Right cardiac atrium (tissue), 5 donors: ENCODE measurements at regions of chr3 and their contacts with region 1.

Region 1: DNA sequence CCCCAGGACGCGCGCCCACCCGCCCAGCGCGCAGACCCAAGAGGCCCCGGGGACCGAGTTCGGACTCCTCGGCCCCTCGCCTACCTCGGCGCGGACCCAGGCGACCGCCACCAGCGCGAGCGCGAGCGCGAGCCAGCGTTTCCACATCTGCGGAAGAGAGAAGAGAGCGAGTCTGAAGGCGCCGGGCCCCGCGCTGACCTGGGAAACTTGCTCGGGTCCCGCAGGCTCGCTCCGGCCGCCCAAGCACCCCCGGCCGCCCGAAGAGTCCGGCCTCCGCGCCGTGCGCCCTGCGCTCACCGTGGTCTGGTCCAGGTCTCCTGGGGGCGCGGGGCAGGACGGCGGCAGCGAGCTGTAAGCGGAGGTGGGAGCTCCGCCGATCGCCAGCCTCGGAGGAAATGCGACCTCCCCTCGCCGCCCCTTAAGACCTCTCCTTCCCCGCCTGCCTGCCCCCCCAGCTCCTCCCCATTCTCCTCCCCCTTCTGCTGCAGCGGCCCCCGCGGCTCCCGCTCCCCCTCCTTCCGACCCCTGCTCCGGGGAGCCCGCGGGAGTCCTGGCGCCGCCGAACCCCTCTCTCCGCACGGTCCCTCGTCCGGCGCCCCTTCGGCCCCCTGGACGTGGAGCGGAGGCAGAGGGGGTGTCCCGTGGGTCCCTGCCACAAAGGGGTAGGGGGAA is at the start of gene FSTL1:
- DNase-seq: peak; percentile 84 to 91 (median 91)
- ATAC-seq: peak; percentile 86
- H3K4me3 ChIP-seq: peak within 1 kb of the TSS; percentile 63
- H3K27ac ChIP-seq: peak within 1 kb of the TSS; percentile 64
- H3K4me1 ChIP-seq: peaks cover 10% of the 10 kb centered on the region
- H3K27me3 ChIP-seq: no peaks in the 10 kb centered on the region
- total RNA-seq, gene FSTL1: 341 to 735 (median 465) TPM

Region 2: GRCh38 chr3:120021523-120021922 is 429.2 kb before region 1 on chr3:
- intact Hi-C with region 1: no loop called
- DNase-seq: no peak
- ATAC-seq: no peak
- H3K4me3 ChIP-seq: no peak overlapping the region
- H3K27ac ChIP-seq: no peak overlapping the region
- H3K4me1 ChIP-seq: no peaks in the 10 kb centered on the region
- H3K27me3 ChIP-seq: no peaks in the 10 kb centered on the region

Region 3: DNA sequence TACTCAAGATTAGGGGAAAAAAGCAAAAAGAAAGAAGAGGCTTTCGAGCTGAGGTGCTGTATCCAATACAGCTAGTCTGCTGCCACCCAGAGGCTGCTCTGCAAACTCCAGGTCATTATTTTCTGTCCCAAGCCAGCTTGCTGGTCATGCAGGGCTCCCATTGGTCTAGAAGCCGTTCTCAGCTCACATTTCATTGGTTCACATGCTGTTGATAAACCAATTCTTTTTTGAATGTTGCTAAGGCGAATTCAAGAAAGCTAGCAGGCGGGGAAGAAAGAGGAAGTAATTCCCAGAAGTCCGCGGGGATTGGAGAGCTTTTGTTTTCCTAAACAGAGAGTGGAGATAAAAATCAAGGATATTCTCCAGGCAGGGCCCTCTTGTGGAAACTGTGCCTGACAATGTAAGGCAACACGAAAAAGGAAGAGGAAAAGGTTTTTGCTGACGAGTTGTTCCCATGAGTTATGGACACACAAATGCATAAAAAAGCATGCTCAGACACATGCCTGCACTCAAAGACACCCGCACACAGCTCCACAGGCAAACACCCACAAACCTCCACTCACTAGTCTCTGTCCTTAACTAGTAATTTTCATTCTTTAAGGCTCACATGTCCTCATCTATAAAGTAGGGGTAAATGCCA is 33.3 kb before region 1 on chr3:
- intact Hi-C with region 1: loop called in 1 of 4 experiments (anchors 2 kb)
- DNase-seq: peak; percentile 88 to 94 (median 94)
- ATAC-seq: peak; percentile 66 to 81
- H3K4me3 ChIP-seq: no peak overlapping the region
- H3K27ac ChIP-seq: peak overlapping the region; percentile 49
- H3K4me1 ChIP-seq: peaks cover 17% of the 10 kb centered on the region
- H3K27me3 ChIP-seq: no peaks in the 10 kb centered on the region

Region 4: GRCh38 chr3:120498556-120499346 is 48.0 kb after region 1 on chr3:
- intact Hi-C with region 1: loop called in 2 of 4 experiments (anchors 5 to 10 kb)
- DNase-seq: no peak
- ATAC-seq: peak; percentile 71 to 74
- H3K4me3 ChIP-seq: no peak overlapping the region
- H3K27ac ChIP-seq: no peak overlapping the region
- H3K4me1 ChIP-seq: no peaks in the 10 kb centered on the region
- H3K27me3 ChIP-seq: no peaks in the 10 kb centered on the region

Region 5: DNA sequence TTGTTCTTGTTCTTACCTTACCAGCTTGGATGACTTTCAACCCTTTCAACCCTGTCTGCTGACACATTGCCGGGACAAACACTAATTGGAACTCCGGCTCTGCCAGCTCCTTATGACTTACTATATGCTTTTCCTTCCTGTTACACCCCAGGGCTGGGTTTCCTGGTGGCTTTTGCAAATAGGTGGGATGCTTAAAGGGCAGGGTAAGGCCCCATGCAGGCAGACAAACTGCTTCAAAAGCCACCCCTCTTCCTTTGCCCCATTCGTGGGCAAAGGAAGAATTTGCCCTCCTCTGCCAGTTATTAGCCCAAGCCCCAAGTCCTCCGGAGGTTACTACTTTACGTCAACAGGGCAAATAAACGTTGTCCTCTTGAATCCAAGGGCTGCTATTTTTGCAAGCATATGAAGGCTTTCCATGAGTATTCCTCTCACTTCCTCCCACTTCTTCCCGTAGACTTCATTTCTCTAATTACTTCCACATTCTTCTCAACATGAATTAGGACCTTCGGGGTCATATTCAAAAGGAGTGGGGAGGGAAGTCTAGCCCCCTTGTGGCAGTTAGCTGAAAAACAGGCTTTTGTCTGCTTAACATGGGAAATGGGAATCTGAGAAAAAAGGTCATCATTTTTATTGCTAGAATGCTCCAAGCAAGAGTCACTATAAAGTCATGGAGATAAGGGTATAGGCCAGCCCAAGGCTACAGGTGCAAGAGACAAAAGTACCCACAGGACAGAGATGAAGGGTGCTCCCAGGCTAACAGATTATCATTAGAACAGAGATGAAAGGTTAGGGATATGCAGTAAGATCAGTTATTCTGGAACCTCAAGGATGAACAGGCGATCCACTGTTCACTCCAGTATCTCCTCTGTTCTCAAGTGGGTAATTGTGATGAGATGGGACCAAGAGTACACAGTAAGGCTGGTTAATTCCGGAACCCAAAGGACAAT is 56.4 kb after region 1 on chr3:
- intact Hi-C with region 1: loop called in 1 of 4 experiments (anchors 10 kb)
- DNase-seq: no peak
- ATAC-seq: peak; percentile 71 to 73
- H3K4me3 ChIP-seq: no peak overlapping the region
- H3K27ac ChIP-seq: no peak overlapping the region
- H3K4me1 ChIP-seq: peaks cover 10% of the 10 kb centered on the region
- H3K27me3 ChIP-seq: no peaks in the 10 kb centered on the region

Region 6: GRCh38 chr3:120678331-120678947 is 227.7 kb after region 1 on chr3:
- intact Hi-C with region 1: no loop called
- DNase-seq: peak; percentile 25 to 35 (median 26)
- ATAC-seq: peak; percentile 90 to 92
- H3K4me3 ChIP-seq: no peak overlapping the region
- H3K27ac ChIP-seq: peak overlapping the region; percentile 17
- H3K4me1 ChIP-seq: no peaks in the 10 kb centered on the region
- H3K27me3 ChIP-seq: no peaks in the 10 kb centered on the region